OCI-LY7 (cell line): ENCODE measurements at regions of chr17 and their contacts with region 1.

Region 1: DNA sequence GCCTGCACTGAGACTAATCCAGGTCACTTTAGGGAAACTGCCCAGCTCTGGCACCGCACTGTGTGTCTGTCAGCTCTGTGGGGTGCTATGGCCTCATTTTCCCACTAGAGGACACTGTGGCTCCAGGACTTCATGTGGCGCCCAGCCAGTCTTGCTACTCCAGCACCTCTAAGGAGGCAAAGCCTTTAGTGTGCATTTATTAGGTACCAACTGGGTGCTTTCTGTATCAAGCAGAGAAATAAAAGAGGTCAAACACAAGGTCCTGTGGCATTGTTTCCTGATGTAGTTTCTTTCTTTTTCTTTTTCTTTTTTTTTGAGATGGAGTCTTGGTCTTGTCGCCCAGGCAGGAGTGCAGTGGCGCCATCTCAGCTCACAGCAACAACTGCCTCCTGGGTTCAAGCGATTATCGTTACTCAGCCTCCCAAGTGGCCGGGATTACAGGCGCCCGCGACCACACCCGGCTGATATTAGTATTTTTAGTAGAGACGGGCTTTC is 12.5 kb upstream of the RHBDL3 start:
- DNase-seq: peak; percentile 79
- H3K4me3 ChIP-seq: no peak overlapping the region
- H3K27ac ChIP-seq: no peak overlapping the region
- H3K4me1 ChIP-seq: no peaks in the 10 kb centered on the region
- CTCF ChIP-seq: peak; percentile 99

Region 2: DNA sequence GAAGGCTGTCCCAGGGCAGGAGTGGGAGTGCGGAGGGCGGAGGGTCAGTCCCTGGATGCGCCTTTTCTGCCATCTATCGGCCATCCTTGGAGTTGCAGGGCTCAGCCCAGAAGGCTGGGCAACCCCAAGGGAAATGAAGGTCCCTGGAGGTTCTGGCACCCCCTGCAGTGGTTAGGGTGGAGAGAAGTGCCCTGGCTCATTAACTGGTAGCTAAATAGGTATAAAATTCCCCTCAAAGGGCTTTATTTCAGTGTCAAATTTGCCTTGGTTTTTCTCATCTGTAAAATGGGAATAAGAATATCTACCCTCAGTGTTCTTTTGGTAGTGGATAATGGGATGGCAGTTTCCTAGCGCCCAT is 66.4 kb after region 1 on chr17:
- CTCF ChIA-PET with region 1: no interaction called
- POLR2A ChIA-PET with region 1: interaction called, 5 read pairs
- intact Hi-C with region 1: loop called (anchors 1 kb)
- DNase-seq: peak; percentile 82
- H3K4me3 ChIP-seq: no peak overlapping the region
- H3K27ac ChIP-seq: no peak overlapping the region
- H3K4me1 ChIP-seq: peaks cover 15% of the 10 kb centered on the region
- CTCF ChIP-seq: peak; percentile 96

Region 3: GRCh38 chr17:32444308-32445073 is 191.3 kb after region 1 on chr17 and contains the start of gene PSMD11:
- CTCF ChIA-PET with region 1: no interaction called
- POLR2A ChIA-PET with region 1: no interaction called
- intact Hi-C with region 1: loop called (anchors 5 kb)
- DNase-seq: peak; percentile 98
- H3K4me3 ChIP-seq: peak within 1 kb of the TSS; percentile 99
- H3K27ac ChIP-seq: peak within 1 kb of the TSS; percentile 50
- H3K4me1 ChIP-seq: peaks cover 25% of the 10 kb centered on the region
- CTCF ChIP-seq: peak; percentile 14; the same call in 1 of the 2 replicates
- total RNA-seq, gene PSMD11: 81.0 and 89.3 TPM in 2 replicates